ENCODE measurements at regions of chr7 and their contacts with region 1.

Region 1: DNA sequence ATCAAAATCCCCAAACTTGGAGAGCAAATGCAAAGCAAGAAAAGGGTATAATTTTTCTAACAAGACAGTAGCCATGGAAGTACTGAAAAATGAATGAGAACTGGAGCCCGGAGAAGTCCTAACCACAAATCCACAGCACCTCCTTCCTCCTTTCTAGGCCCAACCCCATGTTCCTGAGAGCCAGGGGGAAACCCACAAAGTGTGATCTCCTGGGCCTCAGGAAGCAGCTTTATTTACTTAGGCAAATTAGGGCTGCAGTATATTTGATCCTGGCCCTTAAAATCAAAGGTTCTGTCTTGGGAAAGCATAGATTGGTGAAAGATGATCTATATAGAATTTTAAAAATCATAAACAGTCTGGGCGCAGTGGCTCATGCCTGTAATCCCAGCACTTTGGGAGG is 103.0 kb downstream of the DOCK4 start:
- DNase-seq: no peak
- ATAC-seq: no peak
- H3K4me3 ChIP-seq: no peak overlapping the region
- H3K4me3 Mint-ChIP-seq: no peak overlapping the region
- H3K27ac ChIP-seq: no peak overlapping the region
- H3K27ac Mint-ChIP-seq: no peak overlapping the region
- H3K4me1 ChIP-seq: no peaks in the 10 kb centered on the region
- H3K4me1 Mint-ChIP-seq: no peaks in the 10 kb centered on the region
- H3K27me3 ChIP-seq: peaks cover 3% of the 10 kb centered on the region
- H3K27me3 Mint-ChIP-seq: peaks cover 3 to 7% of the 10 kb centered on the region in 2 donors
- CTCF ChIP-seq: no peak

Region 2: DNA sequence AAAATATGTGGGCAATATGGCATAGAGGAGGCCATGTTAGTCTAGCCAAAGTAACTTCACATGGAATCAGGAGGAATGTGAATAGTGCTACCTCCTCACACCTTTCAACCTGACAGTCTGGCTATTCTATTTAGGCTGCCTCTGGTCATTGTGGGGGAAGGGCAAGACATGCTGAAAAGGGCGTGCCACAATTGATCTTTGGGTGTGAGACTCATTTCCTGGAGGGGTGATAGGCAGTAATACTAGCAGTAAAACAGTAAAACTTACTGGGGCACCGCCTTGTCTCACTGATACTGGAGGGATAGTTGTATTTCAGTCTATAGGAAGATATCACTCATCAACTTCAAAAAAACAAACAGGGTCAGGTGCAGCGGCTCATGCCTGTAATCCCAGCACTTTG is 598.2 kb after region 1 on chr7:
- intact Hi-C with region 1: loop called (anchors 5 kb)
- DNase-seq: no peak
- ATAC-seq: no peak
- H3K4me3 ChIP-seq: no peak overlapping the region
- H3K4me3 Mint-ChIP-seq: no peak overlapping the region
- H3K27ac ChIP-seq: no peak overlapping the region
- H3K27ac Mint-ChIP-seq: no peak overlapping the region
- H3K4me1 ChIP-seq: no peaks in the 10 kb centered on the region
- H3K4me1 Mint-ChIP-seq: no peaks in the 10 kb centered on the region
- H3K27me3 ChIP-seq: no peaks in the 10 kb centered on the region
- H3K27me3 Mint-ChIP-seq: peaks cover 0 to 37% of the 10 kb centered on the region in 2 donors
- CTCF ChIP-seq: no peak